Lower lobe of right lung (tissue), 2 donors: ENCODE measurements at regions of chr15 and their contacts with region 1.

Region 1: DNA sequence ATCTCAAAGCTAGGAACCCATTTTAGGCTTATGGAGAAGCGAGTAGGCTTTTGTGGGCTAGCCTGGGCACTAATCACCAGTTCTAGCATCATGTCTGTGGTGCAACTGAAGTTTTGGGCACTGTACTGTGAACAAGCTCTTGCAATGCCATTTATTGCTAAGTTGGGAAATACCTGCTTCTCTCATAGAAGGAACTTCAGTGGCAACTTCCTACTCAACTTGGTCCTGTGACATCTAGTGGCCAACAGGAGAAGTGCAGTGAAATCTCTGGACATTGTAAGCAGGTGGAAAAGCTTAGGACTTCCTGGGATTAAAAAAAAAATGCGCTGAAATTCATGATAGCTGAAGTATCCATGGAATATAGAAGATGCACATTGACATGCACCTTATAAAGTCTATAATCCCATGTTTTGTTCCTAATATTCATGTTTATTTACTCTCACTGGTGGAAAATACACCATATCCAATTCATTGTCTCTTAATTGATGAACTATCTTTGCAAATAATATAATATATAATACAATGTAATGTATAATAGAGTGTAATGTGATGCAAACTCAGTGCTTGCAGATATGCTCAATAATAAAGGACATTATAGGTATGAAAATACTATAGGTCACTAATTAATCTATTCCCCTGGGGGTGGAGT is 6.5 kb upstream of the ALDH1A3 start:
- DNase-seq: no peak
- ATAC-seq: peak; percentile 84 to 87
- H3K4me3 ChIP-seq: no peak overlapping the region
- H3K27ac ChIP-seq: no peak overlapping the region
- H3K4me1 ChIP-seq: no peaks in the 10 kb centered on the region
- H3K27me3 ChIP-seq: peaks cover 9% of the 10 kb centered on the region
- CTCF ChIP-seq: peak; percentile 90

Region 2: DNA sequence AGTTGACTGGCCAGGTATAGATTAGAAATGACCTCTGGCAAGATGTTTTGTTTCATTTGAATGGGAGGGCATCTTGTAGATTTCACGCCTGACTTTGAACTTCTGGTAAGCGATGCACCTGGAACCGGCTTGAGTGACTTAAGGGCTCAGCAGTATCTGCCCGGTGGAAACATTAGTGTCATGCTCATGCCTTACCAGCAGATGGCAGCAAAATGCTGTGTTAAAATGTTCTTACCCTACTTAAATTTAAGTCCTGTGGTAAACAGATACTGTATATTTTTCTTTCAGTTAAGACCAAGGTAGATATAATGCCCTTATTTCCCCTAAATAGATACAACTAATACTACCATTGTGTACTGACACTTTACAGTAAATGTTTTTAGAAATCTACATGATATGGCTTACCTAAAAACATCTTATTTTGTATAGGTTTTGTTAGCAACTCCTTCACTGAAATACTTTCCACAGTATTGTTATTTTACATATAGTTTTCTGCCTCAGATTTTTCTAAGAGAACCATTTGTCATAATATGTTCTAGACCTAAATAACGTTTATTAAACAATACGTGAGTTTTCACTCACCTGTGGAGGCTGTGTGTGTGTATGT is 245.3 kb before region 1 on chr15:
- intact Hi-C with region 1: loop called (anchors 10 kb)
- DNase-seq: no peak
- ATAC-seq: peak; percentile 86 to 88
- H3K4me3 ChIP-seq: no peak overlapping the region
- H3K27ac ChIP-seq: no peak overlapping the region
- H3K4me1 ChIP-seq: no peaks in the 10 kb centered on the region
- H3K27me3 ChIP-seq: no peaks in the 10 kb centered on the region
- CTCF ChIP-seq: peak; percentile 84